ENCODE measurements at regions of chr12 and their contacts with region 1.

Region 1: GRCh38 chr12:31406345-31406744 is 80.4 kb upstream of the SINHCAF start:
- DNase-seq: no peak
- H3K4me3 Mint-ChIP-seq: no peak overlapping the region
- H3K27ac Mint-ChIP-seq: no peak overlapping the region
- H3K4me1 Mint-ChIP-seq: peaks cover 6% of the 10 kb centered on the region
- H3K27me3 Mint-ChIP-seq: peaks cover 6% of the 10 kb centered on the region

Region 2: DNA sequence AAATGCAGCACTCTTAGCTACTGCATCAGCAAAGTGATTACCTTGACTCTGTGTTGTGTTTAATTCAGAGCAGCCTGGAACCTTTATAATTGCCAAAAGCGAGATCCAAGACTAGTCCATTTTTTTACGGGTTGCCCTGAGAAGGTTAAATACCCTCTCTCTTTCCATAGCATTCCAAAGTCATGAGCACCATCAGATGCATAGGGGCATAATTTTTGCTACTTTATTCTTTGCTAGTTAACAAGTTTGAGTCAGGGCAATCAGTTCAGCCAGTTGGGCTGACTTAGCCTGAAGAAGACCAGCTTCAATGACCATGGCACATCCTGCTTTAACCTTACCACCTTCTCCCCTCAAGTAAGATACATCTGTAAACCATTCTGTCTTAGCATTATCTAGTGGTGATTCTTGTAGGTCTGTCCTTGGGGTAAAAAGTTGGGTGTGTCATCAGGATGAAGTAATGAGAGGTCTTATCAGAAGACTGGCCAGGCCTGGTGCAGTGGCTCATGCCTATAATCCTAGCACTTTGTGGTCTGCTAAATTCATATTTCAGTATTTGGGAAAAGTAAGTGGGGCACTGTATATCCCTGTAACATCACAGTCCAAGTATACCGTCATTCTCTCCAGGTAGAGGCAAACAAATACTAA is 99.6 kb before region 1 on chr12:
- CTCF ChIA-PET with region 1: no interaction called
- DNase-seq: no peak
- H3K4me3 Mint-ChIP-seq: no peak overlapping the region
- H3K27ac Mint-ChIP-seq: no peak overlapping the region
- H3K4me1 Mint-ChIP-seq: peaks cover 9% of the 10 kb centered on the region
- H3K27me3 Mint-ChIP-seq: no peaks in the 10 kb centered on the region

Region 3: DNA sequence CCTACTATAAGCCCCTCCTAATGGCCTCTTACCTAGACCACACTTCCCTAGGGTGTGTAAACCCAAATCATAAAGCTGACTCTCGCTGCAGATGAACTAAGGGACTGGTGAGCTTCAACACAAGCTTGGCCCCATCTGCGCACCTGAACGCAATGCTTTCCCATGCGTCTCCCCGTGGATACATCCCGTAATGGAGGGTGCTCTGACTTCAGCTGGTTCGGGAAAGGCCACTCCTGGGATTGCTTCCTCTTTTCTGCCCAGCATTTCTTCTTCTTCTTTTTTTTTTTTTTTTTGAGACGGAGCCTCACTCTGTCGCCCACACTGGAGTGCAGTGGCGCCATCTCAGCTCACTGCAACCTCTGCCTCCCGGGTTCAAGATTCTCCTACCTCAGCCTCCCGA is 225.4 kb after region 1 on chr12:
- CTCF ChIA-PET with region 1: interaction called, 12 read pairs
- DNase-seq: no peak
- H3K4me3 Mint-ChIP-seq: no peak overlapping the region
- H3K27ac Mint-ChIP-seq: no peak overlapping the region
- H3K4me1 Mint-ChIP-seq: peaks cover 2% of the 10 kb centered on the region
- H3K27me3 Mint-ChIP-seq: peaks cover 7% of the 10 kb centered on the region

Measured in activated naive CD4-positive, alpha-beta T cell treated with anti-CD3 and anti-CD28 coated beads, Interleukin-2, amount 10 ng/mL, durations not matched to agents 7 days and 5 days (primary cell).